Mammary epithelial cell (primary cell): ENCODE measurements at regions of chr6 and their contacts with region 1.

Region 1: DNA sequence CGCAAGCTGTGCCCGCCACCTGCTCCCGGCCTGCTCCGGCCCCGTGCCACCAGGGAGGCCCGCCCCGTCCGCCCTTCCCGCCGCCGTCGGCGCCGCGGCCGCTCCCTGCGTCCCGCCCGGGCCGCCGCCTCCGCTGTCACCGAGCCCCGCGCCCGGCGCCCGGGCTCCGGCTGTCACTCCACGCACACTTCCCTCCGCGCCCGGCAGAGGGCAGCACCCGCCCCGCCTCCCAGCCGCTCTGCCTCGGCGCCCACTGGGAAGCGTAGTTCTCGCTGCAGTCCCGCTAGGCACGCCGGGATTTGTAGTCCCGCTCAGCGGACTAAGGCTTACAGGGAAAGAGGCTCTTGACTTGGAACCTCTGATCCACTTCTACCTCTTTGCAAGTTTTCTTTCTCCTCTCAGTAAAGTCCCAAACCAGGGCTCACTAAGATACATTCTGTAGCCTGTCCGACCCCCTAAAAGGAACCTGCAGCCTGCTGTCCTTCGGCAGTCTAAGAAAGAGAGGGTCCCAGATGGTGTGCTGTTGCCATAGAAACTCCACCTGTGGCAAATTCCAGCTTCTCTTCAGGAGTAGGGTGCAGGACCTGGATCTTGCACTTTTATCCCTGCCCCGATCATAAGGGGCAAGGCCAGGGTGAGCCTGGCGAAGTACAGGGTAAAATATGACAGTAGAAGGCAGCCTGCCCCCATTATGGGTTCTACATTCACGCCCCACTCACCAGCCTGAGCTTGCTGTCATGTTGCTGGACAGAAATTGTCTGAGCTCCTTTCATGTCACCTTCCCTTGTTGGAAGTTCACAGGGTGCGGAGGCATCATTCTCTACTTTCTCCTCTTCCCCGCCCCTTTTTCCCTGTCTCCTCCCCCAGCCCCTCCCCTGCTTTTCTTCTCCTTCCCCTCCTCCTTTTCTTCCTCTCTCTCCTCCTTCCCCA is at the start of gene TFEB:
- DNase-seq: peak; percentile 84
- H3K4me3 ChIP-seq: peak within 1 kb of the TSS; percentile 48 to 85 (median 75)
- H3K27ac ChIP-seq: peak within 1 kb of the TSS; percentile 14
- H3K4me1 ChIP-seq: peaks cover 33% of the 10 kb centered on the region
- H3K27me3 ChIP-seq: no peaks in the 10 kb centered on the region
- CTCF ChIP-seq: peak; percentile 82
- total RNA-seq, gene TFEB: 25.9 to 29.0 TPM

Region 2: GRCh38 chr6:41257369-41258195 is 478.1 kb before region 1 on chr6:
- CTCF ChIA-PET with region 1: no interaction called
- dilution Hi-C with region 1: no loop called
- in situ Hi-C with region 1: no loop called
- intact Hi-C with region 1: no loop called
- DNase-seq: peak; percentile 49
- H3K4me3 ChIP-seq: no peak overlapping the region
- H3K27ac ChIP-seq: no peak overlapping the region
- H3K4me1 ChIP-seq: peaks cover 11% of the 10 kb centered on the region
- H3K27me3 ChIP-seq: no peaks in the 10 kb centered on the region
- CTCF ChIP-seq: no peak

Region 3: GRCh38 chr6:41697861-41698781 is 37.6 kb before region 1 on chr6:
- CTCF ChIA-PET with region 1: no interaction called
- dilution Hi-C with region 1: no loop called
- in situ Hi-C with region 1: no loop called
- intact Hi-C with region 1: loop called (anchors 5 kb)
- DNase-seq: peak; percentile 81
- H3K4me3 ChIP-seq: no peak overlapping the region
- H3K27ac ChIP-seq: peak overlapping the region; percentile 89
- H3K4me1 ChIP-seq: peaks cover 26% of the 10 kb centered on the region
- H3K27me3 ChIP-seq: no peaks in the 10 kb centered on the region
- CTCF ChIP-seq: no peak

Region 4: DNA sequence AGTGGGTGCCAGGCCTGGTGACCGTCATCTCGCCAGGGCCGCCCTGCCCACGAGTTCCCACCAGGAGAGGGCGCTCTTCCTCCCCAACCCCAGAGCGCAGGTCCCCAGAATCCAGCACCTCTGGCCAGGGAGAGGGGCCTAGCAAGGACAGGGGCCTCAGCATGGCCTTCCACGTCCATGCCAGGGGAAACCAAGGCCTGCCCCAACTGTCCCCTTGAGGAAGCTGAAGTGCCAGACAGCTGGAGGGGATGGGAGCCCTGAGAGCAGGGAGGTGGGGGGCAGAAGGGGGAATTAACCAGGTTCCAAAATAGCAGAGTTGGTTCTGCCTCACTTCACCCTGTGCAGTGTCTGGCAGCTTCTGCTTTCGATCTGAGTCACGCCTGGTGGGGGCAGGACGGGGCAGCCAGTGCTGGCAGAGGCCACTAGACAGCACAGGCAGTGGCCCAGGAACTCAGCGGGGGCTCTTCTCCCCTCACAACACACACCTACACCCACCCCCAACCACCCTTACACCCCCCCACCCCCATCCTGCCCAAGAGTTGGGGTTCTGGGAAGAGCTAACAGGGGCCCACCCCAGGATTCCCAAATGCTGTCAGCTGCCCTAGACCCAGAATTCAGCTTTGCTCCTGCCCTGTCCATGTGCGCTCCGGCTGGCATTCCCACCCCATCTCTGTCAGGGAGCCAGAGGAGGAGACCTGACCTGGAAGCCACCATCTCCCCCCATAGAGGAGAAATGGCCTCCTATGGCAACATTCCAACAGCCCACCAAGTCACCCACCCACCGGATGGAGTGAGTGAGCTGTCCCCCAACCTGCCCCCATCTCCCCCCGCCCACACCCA is 29.5 kb before region 1 on chr6:
- CTCF ChIA-PET with region 1: no interaction called
- dilution Hi-C with region 1: no loop called
- in situ Hi-C with region 1: no loop called
- intact Hi-C with region 1: loop called (anchors 1 kb)
- DNase-seq: peak; percentile 71
- H3K4me3 ChIP-seq: no peak overlapping the region
- H3K27ac ChIP-seq: peak overlapping the region; percentile 17
- H3K4me1 ChIP-seq: peaks cover 33% of the 10 kb centered on the region
- H3K27me3 ChIP-seq: no peaks in the 10 kb centered on the region
- CTCF ChIP-seq: peak; percentile 66 to 85

Region 5: DNA sequence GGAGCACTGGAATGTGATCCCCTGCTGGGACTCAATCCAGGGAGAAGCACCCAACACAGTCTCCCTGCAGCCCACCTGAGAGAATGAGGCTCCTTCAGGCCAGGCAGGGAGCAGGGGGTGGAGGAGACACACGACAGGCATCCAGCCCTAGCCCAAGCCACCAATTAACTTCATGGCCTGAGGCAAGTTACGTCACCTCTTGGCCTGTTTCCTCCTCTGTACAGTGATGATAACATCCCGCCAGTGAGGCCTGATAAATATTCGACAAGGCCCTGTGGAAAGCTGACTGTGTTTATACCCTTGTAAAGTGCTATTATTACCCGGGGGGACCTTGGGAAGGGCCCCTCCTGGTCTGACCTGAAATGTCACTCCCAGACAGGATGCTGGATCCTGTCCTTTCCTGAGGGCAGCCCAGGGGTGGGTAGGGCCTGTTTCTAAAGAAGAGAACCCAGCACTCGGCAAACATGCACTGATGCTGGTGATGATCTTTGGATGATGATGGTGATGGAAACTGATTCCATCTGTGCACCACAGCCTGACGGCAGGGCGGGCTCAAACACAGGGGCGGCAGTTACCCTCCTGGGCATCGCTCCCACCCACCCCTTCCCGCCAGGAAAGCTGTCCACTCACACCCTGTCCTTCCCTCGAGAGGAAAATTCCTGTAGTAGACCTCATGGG is 31.6 kb after region 1 on chr6:
- CTCF ChIA-PET with region 1: no interaction called
- dilution Hi-C with region 1: no loop called
- in situ Hi-C with region 1: no loop called
- intact Hi-C with region 1: loop called (anchors 2 kb)
- DNase-seq: peak; percentile 87
- H3K4me3 ChIP-seq: no peak overlapping the region
- H3K27ac ChIP-seq: no peak overlapping the region
- H3K4me1 ChIP-seq: peaks cover 32% of the 10 kb centered on the region
- H3K27me3 ChIP-seq: no peaks in the 10 kb centered on the region
- CTCF ChIP-seq: no peak